ENCODE measurements at regions of chr1 and their contacts with region 1.

Region 1: DNA sequence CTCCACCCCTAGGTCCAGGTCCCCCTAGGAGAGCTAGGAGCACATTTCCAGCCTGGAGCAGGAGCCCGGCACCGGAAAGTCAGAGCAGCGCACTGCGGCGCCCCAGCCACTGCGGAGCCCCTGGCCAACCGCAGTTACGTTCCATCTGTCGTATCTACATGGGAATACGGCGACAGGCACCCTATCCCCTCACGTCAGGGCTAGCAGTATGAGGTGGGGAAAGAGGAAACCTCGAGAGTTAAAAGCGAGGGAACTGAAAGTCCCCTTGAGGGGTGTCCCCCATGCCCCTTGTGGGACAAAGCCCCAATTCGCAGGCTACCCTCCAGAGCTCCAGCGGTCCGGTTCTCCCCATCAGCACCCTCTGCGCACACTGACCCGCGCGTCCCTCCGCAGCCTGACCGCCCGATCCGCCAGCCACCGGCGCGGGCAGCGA is 995 bp downstream of the COLGALT2 start:
- DNase-seq: peak; percentile 68
- H3K4me3 ChIP-seq: peak overlapping the region; percentile 65 to 71 (median 71)
- H3K27ac ChIP-seq: peak overlapping the region; percentile 60 to 84 (median 78)
- H3K4me1 ChIP-seq: peaks cover 0 to 16% (median 8%) of the 10 kb centered on the region in 4 donors
- H3K27me3 ChIP-seq: no peaks in the 10 kb centered on the region
- CTCF ChIP-seq: no peak
- EP300 ChIP-seq: no peak
- POLR2A ChIP-seq: peak in 1 of 2 donors; percentile 22

Region 2: DNA sequence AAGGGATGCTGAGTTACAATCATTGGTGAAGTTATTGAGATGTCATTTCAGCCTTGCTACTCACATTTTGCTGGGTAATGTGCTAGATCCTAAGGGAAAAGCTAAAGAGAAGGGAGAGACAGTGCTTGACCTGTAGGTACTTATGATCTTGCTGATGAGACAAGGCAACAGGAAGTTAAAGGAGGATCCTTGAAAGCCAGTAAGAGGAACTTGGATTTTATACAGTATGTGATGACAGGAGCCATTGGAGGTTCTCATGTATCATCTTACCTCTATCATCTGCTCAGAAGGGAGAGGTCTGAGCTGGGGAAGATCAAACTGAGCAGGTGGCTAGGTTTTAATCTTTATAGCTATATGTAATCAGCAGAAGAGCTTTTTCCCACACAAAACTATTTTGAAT is 389.8 kb before region 1 on chr1:
- intact Hi-C with region 1: loop called (anchors 10 kb)
- DNase-seq: no peak
- H3K4me3 ChIP-seq: no peak overlapping the region
- H3K27ac ChIP-seq: no peak overlapping the region
- H3K4me1 ChIP-seq: no peaks in the 10 kb centered on the region
- H3K27me3 ChIP-seq: no peaks in the 10 kb centered on the region
- CTCF ChIP-seq: no peak
- EP300 ChIP-seq: no peak
- POLR2A ChIP-seq: no peak

Region 3: DNA sequence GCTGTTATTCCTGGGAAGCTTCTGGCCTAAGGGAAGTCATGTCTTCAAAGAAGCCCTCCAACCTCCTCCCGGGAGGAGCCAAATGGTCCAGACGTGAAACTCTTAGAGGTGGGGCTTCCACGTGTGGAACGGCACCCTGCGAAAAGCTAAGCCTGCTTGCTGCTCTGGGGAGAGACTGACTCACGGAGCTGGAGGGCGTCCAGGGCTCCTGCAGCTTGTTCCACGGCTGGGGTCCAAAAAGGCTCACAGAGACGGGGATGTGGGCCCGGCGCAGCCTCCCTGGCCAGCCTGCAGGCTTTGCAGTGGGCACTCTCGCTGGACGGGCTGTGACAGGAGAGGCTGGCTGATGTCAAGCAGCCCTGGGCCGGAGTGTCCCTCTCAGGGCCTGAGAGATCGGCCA is 104.1 kb before region 1 on chr1:
- intact Hi-C with region 1: loop called (anchors 5 kb)
- DNase-seq: peak; percentile 97
- H3K4me3 ChIP-seq: peak overlapping the region in 3 of 4 donors; percentile 11 to 24 (median 21)
- H3K27ac ChIP-seq: peak overlapping the region; percentile 45 to 73 (median 66)
- H3K4me1 ChIP-seq: peaks cover 0 to 27% (median 19%) of the 10 kb centered on the region in 4 donors
- H3K27me3 ChIP-seq: no peaks in the 10 kb centered on the region
- CTCF ChIP-seq: no peak
- EP300 ChIP-seq: no peak
- POLR2A ChIP-seq: no peak

Region 4: DNA sequence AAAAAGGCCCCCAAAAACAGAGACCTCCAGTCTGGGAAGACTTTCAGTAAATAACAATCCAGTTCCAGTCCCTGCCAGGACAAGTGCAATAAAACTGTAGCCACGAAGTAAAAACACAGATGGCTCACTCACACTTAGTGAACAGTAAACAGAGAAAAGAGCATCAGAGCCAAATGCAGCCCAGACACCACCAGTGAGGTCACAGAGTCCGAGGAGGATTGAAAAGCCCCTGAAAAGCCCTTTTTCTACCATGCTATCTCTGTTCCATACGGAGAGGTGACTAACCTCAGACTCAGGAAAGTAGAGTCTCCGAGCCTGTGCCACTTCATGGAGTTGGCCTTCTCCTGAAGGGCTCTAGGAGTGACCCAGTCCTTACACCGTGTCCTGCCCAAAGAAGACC is 83.5 kb before region 1 on chr1:
- intact Hi-C with region 1: loop called (anchors 5 kb)
- DNase-seq: no peak
- H3K4me3 ChIP-seq: no peak overlapping the region
- H3K27ac ChIP-seq: peak overlapping the region in 3 of 4 donors; percentile 65 to 74 (median 72)
- H3K4me1 ChIP-seq: peaks cover 0 to 35% (median 19%) of the 10 kb centered on the region in 4 donors
- H3K27me3 ChIP-seq: no peaks in the 10 kb centered on the region
- CTCF ChIP-seq: no peak
- EP300 ChIP-seq: peak in 1 of 4 donors; percentile 42
- POLR2A ChIP-seq: no peak

Measured in sigmoid colon (tissue), 7 donors.